ENCODE measurements at regions of chr13 and their contacts with region 1.

Region 1: DNA sequence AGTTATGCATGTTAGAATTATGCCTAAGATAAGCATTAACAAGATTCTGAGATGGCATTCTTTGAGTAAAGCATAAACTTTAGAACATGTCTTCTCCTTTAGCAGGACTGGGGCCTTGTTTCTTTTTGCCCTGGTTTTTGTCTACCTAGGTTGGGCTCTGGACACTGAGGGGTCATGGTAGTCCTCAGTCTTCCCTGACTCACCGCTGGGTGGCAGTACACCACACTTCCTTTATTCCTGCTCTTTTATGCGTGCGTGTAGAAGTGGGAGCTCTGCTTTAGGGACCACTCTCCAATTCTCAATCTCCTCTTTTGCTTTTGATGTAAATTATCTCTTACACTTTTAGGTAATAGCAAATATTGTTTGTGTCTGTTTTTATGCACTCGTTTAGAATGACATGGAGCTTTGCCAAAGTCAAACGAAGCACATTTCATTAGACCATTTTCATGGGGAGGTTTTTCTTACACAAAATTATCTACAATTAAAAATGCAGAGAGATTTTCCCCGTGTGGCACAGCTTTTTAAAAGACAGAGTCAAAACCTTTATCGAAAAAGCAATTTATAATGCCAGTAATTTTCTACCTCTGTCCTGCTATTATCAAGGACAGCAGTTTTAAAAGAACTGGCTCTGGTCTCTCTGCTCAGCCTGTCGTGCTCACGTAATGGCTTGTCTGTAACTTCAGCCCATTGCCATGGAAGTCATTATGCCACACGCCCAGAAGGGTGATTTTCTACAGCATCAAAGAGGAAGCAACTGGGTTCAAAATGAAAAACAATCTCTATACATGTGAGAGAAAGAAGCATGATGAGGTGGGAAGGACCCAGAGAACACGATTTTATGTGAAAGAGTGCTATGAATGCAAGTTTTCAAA is 413.9 kb downstream of the COG6 start:
- DNase-seq: peak; percentile 81
- ATAC-seq: peak; percentile 87
- H3K4me3 Mint-ChIP-seq: no peak overlapping the region
- H3K27ac Mint-ChIP-seq: peak overlapping the region; percentile 66
- H3K4me1 Mint-ChIP-seq: peaks cover 25% of the 10 kb centered on the region
- H3K27me3 Mint-ChIP-seq: no peaks in the 10 kb centered on the region
- CTCF ChIP-seq: peak; percentile 78

Region 2: DNA sequence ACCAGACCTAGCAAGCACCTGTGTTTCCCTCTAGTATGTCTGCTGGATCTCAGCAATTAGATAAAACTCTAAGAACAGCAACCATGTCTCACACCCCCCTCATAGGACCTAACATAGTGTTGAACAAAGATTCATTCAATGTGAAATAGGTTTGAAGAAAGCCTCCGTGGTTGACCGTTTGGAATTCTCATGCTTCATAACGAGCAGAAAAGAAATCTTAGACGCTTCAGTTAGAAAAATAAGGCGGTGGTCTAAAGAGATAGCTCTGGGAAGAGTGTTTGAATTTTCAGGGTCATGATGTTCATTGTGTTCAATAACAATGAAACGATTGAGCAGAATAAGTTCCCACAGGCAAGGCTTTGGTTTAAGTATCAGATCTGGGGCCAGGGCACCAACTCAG is 81.1 kb before region 1 on chr13:
- CTCF ChIA-PET with region 1: no interaction called
- POLR2A ChIA-PET with region 1: no interaction called
- intact Hi-C with region 1: no loop called
- DNase-seq: no peak
- ATAC-seq: no peak
- H3K4me3 Mint-ChIP-seq: no peak overlapping the region
- H3K27ac Mint-ChIP-seq: no peak overlapping the region
- H3K4me1 Mint-ChIP-seq: no peaks in the 10 kb centered on the region
- H3K27me3 Mint-ChIP-seq: peaks cover 2% of the 10 kb centered on the region
- CTCF ChIP-seq: no peak

Region 3: DNA sequence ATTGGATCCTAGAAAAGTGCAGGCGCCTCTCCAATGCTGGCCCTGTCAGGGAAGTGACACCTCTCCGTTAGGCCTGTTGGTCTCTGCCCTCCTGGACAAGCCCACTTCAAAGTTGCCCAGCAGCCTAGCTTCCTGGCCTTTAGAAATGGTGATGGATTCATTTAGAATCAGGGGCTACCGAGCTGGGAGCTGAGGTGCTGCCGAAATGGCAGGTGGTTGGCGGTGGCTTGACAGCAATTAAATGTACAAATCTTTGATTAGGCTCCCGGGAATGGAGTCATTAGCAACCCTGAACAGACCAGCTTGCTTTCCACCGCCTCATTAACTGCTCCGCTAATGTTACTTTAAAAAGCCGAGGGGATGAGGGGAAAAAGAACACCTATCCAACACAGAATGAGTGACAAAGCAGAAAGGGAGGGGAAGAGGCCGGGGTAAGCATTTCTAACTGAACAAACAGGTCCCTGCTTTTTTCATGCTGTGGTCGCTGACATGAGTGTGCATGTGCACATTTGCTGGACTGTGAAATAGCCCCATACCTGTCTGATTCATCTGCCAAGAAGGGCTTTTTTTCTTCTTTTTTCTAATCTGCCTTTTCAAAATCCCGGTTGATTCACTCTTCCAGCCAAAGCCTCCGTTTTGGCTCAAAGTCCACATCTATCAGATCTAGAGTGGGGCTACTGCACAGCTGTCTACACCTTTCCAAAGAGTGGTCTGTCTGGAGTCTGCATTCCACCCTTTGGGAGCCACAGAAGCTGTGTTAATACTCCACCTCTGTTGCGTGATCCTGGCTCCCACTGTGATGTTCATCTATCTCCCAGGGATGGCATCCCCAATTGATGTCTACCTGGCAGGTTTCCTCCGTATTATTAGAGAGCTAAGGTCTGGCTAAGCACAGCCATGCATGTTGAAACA is 17.9 kb after region 1 on chr13:
- CTCF ChIA-PET with region 1: interaction called, 20 read pairs
- POLR2A ChIA-PET with region 1: interaction called, 3 read pairs
- intact Hi-C with region 1: no loop called
- DNase-seq: no peak
- ATAC-seq: no peak
- H3K4me3 Mint-ChIP-seq: no peak overlapping the region
- H3K27ac Mint-ChIP-seq: no peak overlapping the region
- H3K4me1 Mint-ChIP-seq: no peaks in the 10 kb centered on the region
- H3K27me3 Mint-ChIP-seq: no peaks in the 10 kb centered on the region
- CTCF ChIP-seq: no peak

Region 4: GRCh38 chr13:40094056-40094455 is 24.6 kb after region 1 on chr13:
- CTCF ChIA-PET with region 1: interaction called, 12 read pairs
- POLR2A ChIA-PET with region 1: interaction called, 3 read pairs
- intact Hi-C with region 1: no loop called
- DNase-seq: no peak
- ATAC-seq: no peak
- H3K4me3 Mint-ChIP-seq: no peak overlapping the region
- H3K27ac Mint-ChIP-seq: no peak overlapping the region
- H3K4me1 Mint-ChIP-seq: peaks cover 14% of the 10 kb centered on the region
- H3K27me3 Mint-ChIP-seq: no peaks in the 10 kb centered on the region
- CTCF ChIP-seq: no peak

Region 5: DNA sequence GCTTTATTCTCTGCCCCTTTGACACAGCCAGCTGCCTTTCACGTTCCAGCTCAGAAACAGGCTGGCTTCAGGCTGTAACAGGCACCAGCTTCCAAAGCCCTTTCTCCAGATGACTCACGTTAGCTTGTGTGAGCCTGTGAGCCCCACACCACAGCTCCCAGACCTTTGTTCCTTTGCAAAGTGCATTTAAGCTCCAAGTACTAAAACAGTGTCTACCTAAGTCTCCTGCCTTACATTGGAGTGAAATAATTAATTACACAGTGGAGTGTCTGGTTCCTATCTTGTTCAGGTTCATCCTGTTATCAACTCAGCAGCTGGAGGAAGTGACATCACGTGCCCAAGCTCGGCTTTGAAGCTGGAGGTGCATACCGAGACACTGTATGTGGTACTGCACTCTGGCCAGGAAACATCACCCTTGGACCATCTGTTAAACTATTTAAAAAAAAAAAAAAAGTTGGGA is 121.3 kb after region 1 on chr13:
- CTCF ChIA-PET with region 1: interaction called, 11 read pairs
- POLR2A ChIA-PET with region 1: no interaction called
- intact Hi-C with region 1: no loop called
- DNase-seq: peak; percentile 85
- ATAC-seq: peak; percentile 38
- H3K4me3 Mint-ChIP-seq: peak overlapping the region; percentile 15
- H3K27ac Mint-ChIP-seq: peak overlapping the region; percentile 92
- H3K4me1 Mint-ChIP-seq: peaks cover 69% of the 10 kb centered on the region
- H3K27me3 Mint-ChIP-seq: no peaks in the 10 kb centered on the region
- CTCF ChIP-seq: no peak

Region 6: GRCh38 chr13:40200273-40200978 is 131.0 kb after region 1 on chr13:
- CTCF ChIA-PET with region 1: interaction called, 11 read pairs
- POLR2A ChIA-PET with region 1: no interaction called
- intact Hi-C with region 1: no loop called
- DNase-seq: no peak
- ATAC-seq: no peak
- H3K4me3 Mint-ChIP-seq: no peak overlapping the region
- H3K27ac Mint-ChIP-seq: no peak overlapping the region
- H3K4me1 Mint-ChIP-seq: peaks cover 26% of the 10 kb centered on the region
- H3K27me3 Mint-ChIP-seq: no peaks in the 10 kb centered on the region
- CTCF ChIP-seq: no peak

Region 7: GRCh38 chr13:40318366-40318765 is 249.0 kb after region 1 on chr13:
- CTCF ChIA-PET with region 1: no interaction called
- POLR2A ChIA-PET with region 1: no interaction called
- intact Hi-C with region 1: no loop called
- DNase-seq: no peak
- ATAC-seq: no peak
- H3K4me3 Mint-ChIP-seq: no peak overlapping the region
- H3K27ac Mint-ChIP-seq: no peak overlapping the region
- H3K4me1 Mint-ChIP-seq: peaks cover 55% of the 10 kb centered on the region
- H3K27me3 Mint-ChIP-seq: no peaks in the 10 kb centered on the region
- CTCF ChIP-seq: no peak

Region 8: DNA sequence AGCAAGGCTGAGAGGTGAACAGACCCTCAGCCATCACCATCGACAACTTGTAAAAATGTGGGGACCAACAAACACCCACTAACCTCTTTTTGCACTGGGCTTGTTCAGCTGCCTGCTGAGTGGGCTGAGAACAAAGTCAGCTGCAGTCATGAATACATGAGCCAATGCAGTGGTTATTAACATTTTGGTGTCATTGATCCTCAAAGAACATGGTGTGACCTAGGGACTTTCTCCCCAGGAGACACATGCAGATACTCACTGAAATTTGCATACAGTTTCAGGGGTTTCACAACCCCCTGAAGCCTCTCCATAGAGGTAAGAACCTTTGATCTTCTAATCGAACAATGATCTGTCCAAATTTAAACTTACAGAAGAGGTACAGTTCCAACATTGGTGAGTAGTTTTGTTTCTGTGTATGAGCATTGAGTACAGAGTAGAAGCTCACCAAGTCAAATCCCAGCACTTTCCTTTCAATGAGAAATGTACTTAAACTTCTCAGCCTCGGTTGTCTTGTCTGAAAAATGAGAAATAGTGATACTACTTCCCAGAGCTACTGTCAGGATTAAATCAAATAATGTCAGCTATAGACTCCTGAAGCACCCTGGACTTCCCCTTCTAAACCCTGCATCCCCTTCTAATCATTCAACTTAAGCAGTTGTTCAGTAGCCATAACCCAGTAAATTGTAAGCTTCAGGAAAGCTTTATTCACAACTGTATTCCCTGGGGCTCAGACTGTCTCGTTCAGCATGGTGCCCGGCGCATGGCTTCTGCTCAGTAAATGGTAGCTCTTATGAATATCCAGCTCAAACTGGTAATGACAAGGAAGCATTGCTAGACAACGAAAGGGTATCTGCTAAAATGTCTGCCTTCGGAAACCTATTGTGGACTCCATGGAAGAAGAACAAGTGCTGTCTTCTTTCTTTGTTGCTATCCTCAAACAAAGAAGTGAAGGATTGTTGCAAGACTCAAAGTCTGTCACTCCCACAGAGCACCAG is 448.4 kb after region 1 on chr13:
- CTCF ChIA-PET with region 1: interaction called, 4 read pairs
- POLR2A ChIA-PET with region 1: no interaction called
- intact Hi-C with region 1: loop called (anchors 10 kb)
- DNase-seq: peak; percentile 66
- ATAC-seq: peak; percentile 80
- H3K4me3 Mint-ChIP-seq: peak overlapping the region; percentile 57
- H3K27ac Mint-ChIP-seq: peak overlapping the region; percentile 89
- H3K4me1 Mint-ChIP-seq: peaks cover 77% of the 10 kb centered on the region
- H3K27me3 Mint-ChIP-seq: no peaks in the 10 kb centered on the region
- CTCF ChIP-seq: no peak

Region 9: DNA sequence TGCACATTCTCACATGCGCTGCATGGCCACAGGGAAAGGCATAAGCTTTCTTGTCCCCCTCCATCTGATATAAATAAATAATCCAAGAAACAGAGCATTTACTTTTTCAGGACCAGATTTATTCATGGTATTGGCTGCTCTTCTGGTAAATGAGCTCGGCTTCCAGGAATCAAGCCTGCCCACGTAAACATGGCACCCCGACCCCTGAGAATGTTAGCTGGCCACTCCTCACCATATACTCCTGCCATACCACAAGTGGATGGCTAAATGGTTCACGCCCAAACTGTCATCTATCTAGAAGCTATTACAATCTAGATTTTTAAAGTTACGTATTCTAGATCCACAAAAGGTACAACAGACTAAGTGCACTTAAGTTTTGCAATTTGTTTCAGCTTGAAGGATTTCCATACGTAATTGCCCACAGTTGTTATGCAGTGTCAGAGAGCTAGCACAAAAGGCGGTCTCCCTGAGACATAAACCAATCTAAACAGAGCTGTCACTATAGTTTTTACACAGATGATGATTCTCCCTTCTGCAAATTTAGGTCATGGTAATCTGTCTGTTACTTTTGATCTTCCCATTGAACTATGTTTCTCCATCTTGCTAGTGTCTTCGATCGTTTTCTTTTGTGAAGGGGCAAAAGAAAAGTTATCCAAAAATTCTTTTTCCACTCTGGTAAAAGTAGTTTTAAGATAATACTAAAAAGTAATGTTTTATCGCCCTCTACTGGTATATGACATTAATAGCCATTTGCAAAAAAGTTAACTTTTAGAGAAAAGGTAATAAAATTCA is 613.2 kb after region 1 on chr13:
- CTCF ChIA-PET with region 1: interaction called, 27 read pairs
- POLR2A ChIA-PET with region 1: no interaction called
- intact Hi-C with region 1: loop called (anchors 5 kb)
- DNase-seq: no peak
- ATAC-seq: peak; percentile 74
- H3K4me3 Mint-ChIP-seq: no peak overlapping the region
- H3K27ac Mint-ChIP-seq: no peak overlapping the region
- H3K4me1 Mint-ChIP-seq: peaks cover 7% of the 10 kb centered on the region
- H3K27me3 Mint-ChIP-seq: no peaks in the 10 kb centered on the region
- CTCF ChIP-seq: peak; percentile 78